Heart right ventricle (tissue), 16 donors: ENCODE measurements at regions of chr11 and their contacts with region 1.

Region 1: GRCh38 chr11:118503216-118503615 is 24.1 kb upstream of the TTC36 start:
- DNase-seq: no peak
- ATAC-seq: peak in 6 of 8 donors; percentile 16 to 65 (median 40)
- H3K4me3 ChIP-seq: no peak overlapping the region
- H3K27ac ChIP-seq: peak overlapping the region in 4 of 10 donors; percentile 19 to 45 (median 28)
- H3K4me1 ChIP-seq: peaks cover 0 to 6% (median 0%) of the 10 kb centered on the region in 9 donors
- H3K27me3 ChIP-seq: no peaks in the 10 kb centered on the region
- CTCF ChIP-seq: no peak

Region 2: GRCh38 chr11:118401151-118401878 is 101.9 kb before region 1 on chr11 and contains the start of gene ATP5MG:
- intact Hi-C with region 1: loop called in 1 of 10 experiments (anchors 5 kb)
- DNase-seq: peak; percentile 92 to 95
- ATAC-seq: peak; percentile 86 to 94 (median 91)
- H3K4me3 ChIP-seq: peak within 1 kb of the TSS; percentile 61 to 97 (median 88)
- H3K27ac ChIP-seq: peak within 1 kb of the TSS; percentile 88 to 97 (median 94)
- H3K4me1 ChIP-seq: peaks cover 3 to 53% (median 46%) of the 10 kb centered on the region in 9 donors
- H3K27me3 ChIP-seq: no peaks in the 10 kb centered on the region
- CTCF ChIP-seq: peak in 3 of 9 donors; percentile 18 to 42 (median 37)
- total RNA-seq, gene ATP5MG: 482 to 777 (median 688) TPM

Region 3: DNA sequence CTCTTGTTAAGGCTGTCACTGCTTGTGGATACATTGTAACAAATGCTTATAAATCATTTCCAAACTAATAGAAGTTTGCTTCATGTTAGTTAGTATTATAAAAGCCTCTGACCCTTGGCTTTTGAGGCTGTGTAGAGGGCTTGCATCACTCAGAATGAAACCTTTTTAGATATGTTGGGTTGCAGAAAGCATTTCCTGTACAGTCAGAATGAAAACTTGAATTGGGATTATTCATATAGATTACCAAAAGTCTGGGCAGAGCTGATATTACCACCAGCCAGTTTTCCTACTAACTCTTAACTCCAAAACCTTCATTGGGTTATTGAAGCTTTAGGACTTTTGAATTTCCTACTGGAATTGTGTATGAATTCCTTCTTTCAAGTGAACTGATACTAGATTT is 54.9 kb before region 1 on chr11:
- intact Hi-C with region 1: no loop called
- DNase-seq: no peak
- ATAC-seq: no peak
- H3K4me3 ChIP-seq: no peak overlapping the region
- H3K27ac ChIP-seq: no peak overlapping the region
- H3K4me1 ChIP-seq: peaks cover 0 to 41% (median 21%) of the 10 kb centered on the region in 9 donors
- H3K27me3 ChIP-seq: no peaks in the 10 kb centered on the region
- CTCF ChIP-seq: no peak

Region 4: GRCh38 chr11:118556758-118557157 is 53.5 kb after region 1 on chr11:
- intact Hi-C with region 1: loop called in 1 of 10 experiments (anchors 5 kb)
- DNase-seq: no peak
- ATAC-seq: no peak
- H3K4me3 ChIP-seq: no peak overlapping the region
- H3K27ac ChIP-seq: no peak overlapping the region
- H3K4me1 ChIP-seq: no peaks in the 10 kb centered on the region
- H3K27me3 ChIP-seq: no peaks in the 10 kb centered on the region
- CTCF ChIP-seq: no peak